Activated CD4-positive, alpha-beta T cell treated with anti-CD3 and anti-CD28 coated beads, Interleukin-2, amount 10 ng/mL, durations not matched to agents 7 days and 5 days (primary cell): ENCODE measurements at regions of chr19 and their contacts with region 1.

Region 1: DNA sequence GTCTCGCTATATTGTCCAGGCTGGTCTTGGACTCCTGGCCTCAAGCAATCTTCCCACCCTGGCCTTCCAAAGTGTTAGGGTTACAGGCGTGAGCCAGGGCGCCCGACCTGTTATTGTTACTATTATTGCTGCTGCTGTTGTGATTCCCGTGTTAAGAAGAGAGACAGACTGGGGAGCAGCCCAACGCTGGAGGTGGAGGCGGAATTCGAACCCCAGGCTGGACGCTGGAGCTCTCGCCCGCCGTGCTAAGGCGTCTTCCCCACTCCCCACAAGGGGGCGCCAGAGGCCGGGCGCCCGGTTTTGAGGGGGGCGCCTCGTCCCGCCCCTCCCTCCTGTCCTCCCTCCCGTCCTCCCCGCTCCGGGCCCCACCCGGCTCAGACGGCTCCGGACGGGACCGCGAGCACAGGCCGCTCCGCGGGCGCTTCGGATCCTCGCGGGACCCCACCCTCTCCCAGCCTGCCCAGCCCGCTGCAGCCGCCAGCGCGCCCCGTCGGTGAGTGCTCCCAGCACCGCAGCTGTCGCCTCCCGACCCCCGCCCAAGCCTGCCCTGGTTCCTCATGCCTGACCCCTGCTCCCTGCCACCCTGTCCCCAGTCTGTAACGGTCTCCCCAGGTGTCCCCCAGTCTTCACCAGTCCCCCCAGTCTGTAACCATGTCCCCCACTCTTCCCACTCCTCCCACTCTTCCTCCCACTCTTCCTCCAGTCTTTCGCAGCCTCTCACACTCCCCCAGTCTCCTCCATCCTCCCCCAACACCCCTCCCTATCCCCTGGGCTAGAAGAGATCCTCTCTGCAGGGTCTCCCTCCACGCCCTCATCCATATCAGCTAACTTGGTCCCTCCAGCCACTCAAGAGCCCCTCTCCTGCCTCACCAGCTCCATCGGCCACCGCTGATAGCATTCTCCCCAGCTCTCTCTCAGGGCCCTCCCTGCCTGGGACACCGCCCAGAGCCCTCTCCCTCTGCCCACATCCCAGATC is at the start of gene EHD2:
- DNase-seq: peak; percentile 30
- H3K4me3 Mint-ChIP-seq: no peak within 1 kb of the TSS
- H3K27ac Mint-ChIP-seq: no peak within 1 kb of the TSS
- H3K4me1 Mint-ChIP-seq: peaks cover 2% of the 10 kb centered on the region
- H3K27me3 Mint-ChIP-seq: peaks cover 26% of the 10 kb centered on the region
- total RNA-seq, gene EHD2: not detected

Region 2: DNA sequence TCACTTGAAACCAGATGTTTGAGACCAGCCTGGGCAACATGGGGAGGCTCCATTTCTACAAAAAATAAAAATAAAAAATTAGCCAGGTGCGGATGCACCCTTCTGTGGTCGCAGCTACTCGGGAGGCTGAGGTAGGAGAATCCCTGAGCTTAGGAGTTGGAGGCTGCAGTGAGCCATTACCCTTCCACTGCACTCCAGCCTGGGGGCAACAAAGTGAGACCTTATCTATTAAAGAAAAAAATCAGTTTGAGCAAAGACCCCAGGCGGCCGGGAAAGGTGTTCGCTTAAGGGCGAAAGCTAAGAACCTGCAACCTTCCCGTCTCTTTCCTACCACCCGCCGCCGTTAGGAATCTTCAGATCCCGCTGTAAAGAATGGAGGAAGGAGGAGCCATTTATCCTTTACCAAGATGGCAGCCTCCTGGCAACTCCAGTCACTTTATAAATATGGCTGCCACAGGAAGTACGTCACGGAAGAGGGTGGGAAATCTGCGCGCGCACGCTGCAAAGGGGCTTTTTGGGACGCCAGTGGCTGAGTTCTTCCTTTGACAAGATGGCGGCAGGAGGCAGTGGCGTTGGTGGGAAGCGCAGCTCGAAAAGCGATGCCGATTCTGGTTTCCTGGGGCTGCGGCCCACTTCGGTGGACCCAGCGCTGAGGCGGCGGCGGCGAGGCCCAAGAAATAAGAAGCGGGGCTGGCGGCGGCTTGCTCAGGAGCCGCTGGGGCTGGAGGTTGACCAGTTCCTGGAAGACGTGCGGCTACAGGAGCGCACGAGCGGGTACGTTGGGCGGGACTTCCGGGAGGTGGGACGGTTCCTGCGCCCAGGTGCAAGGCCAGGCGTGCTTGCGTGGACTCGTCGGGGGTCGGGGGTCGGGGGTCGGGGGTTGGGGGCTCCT is 31.9 kb after region 1 on chr19 and contains the start of gene NOP53:
- CTCF ChIA-PET with region 1: interaction called, 25 read pairs
- POLR2A ChIA-PET with region 1: no interaction called
- DNase-seq: peak; percentile 96
- H3K4me3 Mint-ChIP-seq: peak within 1 kb of the TSS; percentile 98
- H3K27ac Mint-ChIP-seq: peak within 1 kb of the TSS; percentile 100
- H3K4me1 Mint-ChIP-seq: peaks cover 58% of the 10 kb centered on the region
- H3K27me3 Mint-ChIP-seq: no peaks in the 10 kb centered on the region
- total RNA-seq, gene NOP53: 368 to 402 TPM